ENCODE measurements at regions of chr1 and their contacts with region 1.

Region 1: GRCh38 chr1:17439250-17440073 is at the start of gene RCC2:
- DNase-seq: peak; percentile 51 to 89 (median 72)
- ATAC-seq: peak; percentile 74
- H3K4me3 ChIP-seq: peak within 1 kb of the TSS; percentile 90 to 98
- H3K4me3 Mint-ChIP-seq: peak within 1 kb of the TSS; percentile 97
- H3K27ac ChIP-seq: peak within 1 kb of the TSS; percentile 80 to 82
- H3K27ac Mint-ChIP-seq: peak within 1 kb of the TSS; percentile 97
- H3K4me1 ChIP-seq: peaks cover 32% of the 10 kb centered on the region
- H3K4me1 Mint-ChIP-seq: peaks cover 34% of the 10 kb centered on the region
- H3K27me3 ChIP-seq: no peaks in the 10 kb centered on the region
- H3K27me3 Mint-ChIP-seq: no peaks in the 10 kb centered on the region
- CTCF ChIP-seq: no peak
- total RNA-seq, gene RCC2: 25.4 to 28.0 TPM

Region 2: DNA sequence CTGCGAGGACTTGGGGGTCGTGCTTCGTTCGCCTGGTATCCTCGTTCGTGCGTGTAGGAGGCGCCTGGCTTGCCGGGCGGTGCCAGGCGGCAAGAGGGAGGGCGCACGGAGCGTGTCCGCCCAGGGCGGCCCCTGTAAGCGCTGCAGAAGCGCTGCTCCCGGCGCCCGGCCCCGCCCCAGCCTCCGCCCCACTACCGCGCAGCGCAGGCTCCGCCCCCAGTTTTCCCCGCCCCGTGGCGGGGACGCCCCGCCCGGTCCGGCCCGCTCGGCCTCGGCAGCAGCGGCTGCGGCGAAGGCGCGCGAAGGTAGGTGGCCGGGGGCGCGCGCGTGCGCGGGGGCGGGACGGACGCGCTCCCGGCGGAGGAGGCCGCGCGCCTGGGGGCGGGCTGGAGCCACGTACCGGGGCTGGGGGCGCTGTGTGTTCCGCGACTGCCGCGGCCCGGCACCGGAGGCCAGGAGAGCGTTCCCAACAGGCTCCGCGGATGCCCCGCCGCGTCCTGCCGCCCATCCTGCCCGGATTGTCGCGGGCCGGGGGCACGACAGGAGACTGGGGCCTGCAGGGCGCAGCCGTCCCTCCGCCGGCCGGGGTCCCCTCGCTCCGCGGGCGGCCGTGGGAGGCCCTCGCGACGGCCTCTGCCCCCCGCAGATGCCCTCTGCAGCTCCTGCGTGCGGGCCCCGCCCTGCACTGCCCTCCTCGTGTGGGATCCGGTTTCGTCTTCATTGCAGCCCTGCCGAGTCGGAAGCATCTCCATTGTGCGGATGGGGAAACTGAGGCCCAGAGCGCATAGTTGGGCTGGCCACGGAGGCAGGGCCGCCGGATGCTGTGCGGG is 525.4 kb before region 1 on chr1:
- CTCF ChIA-PET with region 1: no interaction called
- POLR2A ChIA-PET with region 1: no interaction called
- intact Hi-C with region 1: loop called in 1 of 2 experiments (anchors 10 kb)
- DNase-seq: peak; percentile 89 to 99 (median 97)
- ATAC-seq: peak; percentile 98
- H3K4me3 ChIP-seq: peak overlapping the region; percentile 62 to 76
- H3K4me3 Mint-ChIP-seq: peak overlapping the region; percentile 82
- H3K27ac ChIP-seq: peak overlapping the region; percentile 62 to 70
- H3K27ac Mint-ChIP-seq: peak overlapping the region; percentile 60
- H3K4me1 ChIP-seq: peaks cover 28% of the 10 kb centered on the region
- H3K4me1 Mint-ChIP-seq: peaks cover 28% of the 10 kb centered on the region
- H3K27me3 ChIP-seq: no peaks in the 10 kb centered on the region
- H3K27me3 Mint-ChIP-seq: no peaks in the 10 kb centered on the region
- CTCF ChIP-seq: no peak

Region 3: DNA sequence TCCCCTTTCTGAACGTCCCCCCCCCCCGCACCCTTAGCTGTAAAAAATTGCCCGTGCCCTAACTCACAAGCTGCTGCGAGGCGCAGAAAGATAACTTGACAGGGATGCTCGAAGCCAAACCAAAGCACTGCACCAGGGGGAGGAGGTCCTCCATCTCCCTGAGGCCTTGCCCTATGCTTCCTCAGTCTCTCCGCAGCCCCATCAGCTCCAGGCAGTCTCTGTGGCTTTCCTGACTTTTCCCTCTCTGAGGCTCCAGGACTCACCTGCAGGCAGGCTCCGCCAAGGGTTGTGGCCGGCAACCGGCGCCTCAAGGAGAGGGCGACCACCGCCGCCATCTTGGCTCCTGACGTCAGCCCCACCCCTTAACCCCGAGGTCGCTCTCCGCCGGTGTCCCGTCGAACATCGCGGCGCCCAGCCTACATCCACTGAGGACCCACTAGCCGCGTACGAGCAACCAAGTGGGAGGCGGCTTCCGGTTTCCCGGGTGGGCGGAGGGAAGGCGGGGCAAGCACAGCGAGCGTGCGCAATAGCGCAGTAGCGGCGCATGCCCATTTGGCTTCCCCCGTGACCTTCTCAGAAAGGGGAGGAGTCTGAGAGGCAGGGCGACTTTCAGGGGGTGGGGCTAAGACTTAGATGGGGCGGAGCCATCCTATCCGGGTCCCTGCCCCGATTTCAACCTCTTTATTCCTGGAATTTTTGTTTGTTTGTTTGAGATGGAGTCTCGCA is 385.6 kb before region 1 on chr1 and contains the start of gene SDHB:
- CTCF ChIA-PET with region 1: no interaction called
- POLR2A ChIA-PET with region 1: no interaction called
- intact Hi-C with region 1: loop called (anchors 2 kb)
- DNase-seq: peak; percentile 97 to 100 (median 99)
- ATAC-seq: peak; percentile 98
- H3K4me3 ChIP-seq: peak within 1 kb of the TSS; percentile 53 to 90
- H3K4me3 Mint-ChIP-seq: peak within 1 kb of the TSS; percentile 99
- H3K27ac ChIP-seq: peak within 1 kb of the TSS; percentile 67 to 84
- H3K27ac Mint-ChIP-seq: peak within 1 kb of the TSS; percentile 98
- H3K4me1 ChIP-seq: peaks cover 16% of the 10 kb centered on the region
- H3K4me1 Mint-ChIP-seq: peaks cover 33% of the 10 kb centered on the region
- H3K27me3 ChIP-seq: no peaks in the 10 kb centered on the region
- H3K27me3 Mint-ChIP-seq: peaks cover 6% of the 10 kb centered on the region
- CTCF ChIP-seq: no peak
- total RNA-seq, gene SDHB: 66.2 to 71.8 TPM

Region 4: GRCh38 chr1:17419626-17420328 is 19.7 kb before region 1 on chr1:
- CTCF ChIA-PET with region 1: interaction called, 7 read pairs
- POLR2A ChIA-PET with region 1: no interaction called
- intact Hi-C with region 1: loop called (anchors 1 kb)
- DNase-seq: peak; percentile 24 to 85 (median 66)
- ATAC-seq: peak; percentile 91
- H3K4me3 ChIP-seq: no peak overlapping the region
- H3K4me3 Mint-ChIP-seq: no peak overlapping the region
- H3K27ac ChIP-seq: no peak overlapping the region
- H3K27ac Mint-ChIP-seq: no peak overlapping the region
- H3K4me1 ChIP-seq: no peaks in the 10 kb centered on the region
- H3K4me1 Mint-ChIP-seq: peaks cover 8% of the 10 kb centered on the region
- H3K27me3 ChIP-seq: no peaks in the 10 kb centered on the region
- H3K27me3 Mint-ChIP-seq: no peaks in the 10 kb centered on the region
- CTCF ChIP-seq: peak; percentile 96

Region 5: DNA sequence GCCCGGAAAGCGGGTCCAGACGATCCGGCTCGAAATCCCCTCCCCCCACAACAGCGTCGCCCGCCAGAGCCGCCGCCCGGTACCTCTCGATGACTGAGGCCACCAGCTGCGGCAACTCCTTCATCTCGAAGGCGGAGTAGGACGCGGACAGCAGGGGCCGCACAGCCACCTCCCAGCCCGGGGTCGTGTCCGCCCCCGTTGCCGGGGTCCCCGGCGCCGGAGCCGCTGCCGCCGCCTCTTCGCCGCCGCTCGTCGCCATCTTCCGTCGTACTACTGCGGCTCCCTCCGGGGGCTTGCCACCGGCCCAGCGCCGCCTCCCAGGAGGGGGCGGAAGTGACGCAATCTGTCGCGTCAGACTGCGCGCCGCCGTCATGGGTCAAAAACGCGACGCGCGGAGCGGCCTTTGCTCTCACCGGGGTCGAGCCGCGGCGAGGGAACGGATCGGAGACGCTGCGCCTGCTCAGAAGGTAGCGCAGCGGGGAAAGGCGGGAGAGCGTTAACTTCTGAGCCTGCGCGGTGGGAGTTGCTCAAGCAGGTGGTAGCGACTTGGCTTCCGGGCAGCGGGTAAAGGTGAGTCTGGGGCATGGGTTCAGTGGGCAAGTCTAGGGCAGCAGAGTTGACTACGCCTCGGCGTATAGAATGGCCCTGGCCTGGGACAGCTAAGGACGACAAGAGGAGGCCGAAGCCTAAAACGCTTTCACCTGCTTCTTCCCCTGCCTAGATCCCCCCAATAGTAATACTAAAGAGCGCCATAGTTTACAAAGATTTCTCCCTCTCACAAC is 1770.7 kb after region 1 on chr1 and contains the start of gene UBR4:
- CTCF ChIA-PET with region 1: no interaction called
- POLR2A ChIA-PET with region 1: no interaction called
- intact Hi-C with region 1: loop called in 1 of 2 experiments (anchors 5 kb)
- DNase-seq: peak; percentile 91 to 99 (median 97)
- ATAC-seq: peak; percentile 93
- H3K4me3 ChIP-seq: peak within 1 kb of the TSS; percentile 73 to 96
- H3K4me3 Mint-ChIP-seq: peak within 1 kb of the TSS; percentile 96
- H3K27ac ChIP-seq: peak within 1 kb of the TSS; percentile 86 to 96
- H3K27ac Mint-ChIP-seq: peak within 1 kb of the TSS; percentile 99
- H3K4me1 ChIP-seq: peaks cover 48% of the 10 kb centered on the region
- H3K4me1 Mint-ChIP-seq: peaks cover 76% of the 10 kb centered on the region
- H3K27me3 ChIP-seq: no peaks in the 10 kb centered on the region
- H3K27me3 Mint-ChIP-seq: no peaks in the 10 kb centered on the region
- CTCF ChIP-seq: no peak
- total RNA-seq, gene UBR4: 146 to 148 TPM